Psoas muscle (tissue), 8 donors: ENCODE measurements at regions of chr1 and their contacts with region 1.

Region 1: GRCh38 chr1:42173155-42173933 is 8.8 kb upstream of the GUCA2A start:
- DNase-seq: peak; percentile 64 to 78
- ATAC-seq: peak; percentile 76 to 88 (median 80)
- H3K4me3 ChIP-seq: no peak overlapping the region
- H3K27ac ChIP-seq: no peak overlapping the region
- H3K4me1 ChIP-seq: peaks cover 21% of the 10 kb centered on the region
- H3K27me3 ChIP-seq: no peaks in the 10 kb centered on the region
- CTCF ChIP-seq: peak; percentile 96

Region 2: DNA sequence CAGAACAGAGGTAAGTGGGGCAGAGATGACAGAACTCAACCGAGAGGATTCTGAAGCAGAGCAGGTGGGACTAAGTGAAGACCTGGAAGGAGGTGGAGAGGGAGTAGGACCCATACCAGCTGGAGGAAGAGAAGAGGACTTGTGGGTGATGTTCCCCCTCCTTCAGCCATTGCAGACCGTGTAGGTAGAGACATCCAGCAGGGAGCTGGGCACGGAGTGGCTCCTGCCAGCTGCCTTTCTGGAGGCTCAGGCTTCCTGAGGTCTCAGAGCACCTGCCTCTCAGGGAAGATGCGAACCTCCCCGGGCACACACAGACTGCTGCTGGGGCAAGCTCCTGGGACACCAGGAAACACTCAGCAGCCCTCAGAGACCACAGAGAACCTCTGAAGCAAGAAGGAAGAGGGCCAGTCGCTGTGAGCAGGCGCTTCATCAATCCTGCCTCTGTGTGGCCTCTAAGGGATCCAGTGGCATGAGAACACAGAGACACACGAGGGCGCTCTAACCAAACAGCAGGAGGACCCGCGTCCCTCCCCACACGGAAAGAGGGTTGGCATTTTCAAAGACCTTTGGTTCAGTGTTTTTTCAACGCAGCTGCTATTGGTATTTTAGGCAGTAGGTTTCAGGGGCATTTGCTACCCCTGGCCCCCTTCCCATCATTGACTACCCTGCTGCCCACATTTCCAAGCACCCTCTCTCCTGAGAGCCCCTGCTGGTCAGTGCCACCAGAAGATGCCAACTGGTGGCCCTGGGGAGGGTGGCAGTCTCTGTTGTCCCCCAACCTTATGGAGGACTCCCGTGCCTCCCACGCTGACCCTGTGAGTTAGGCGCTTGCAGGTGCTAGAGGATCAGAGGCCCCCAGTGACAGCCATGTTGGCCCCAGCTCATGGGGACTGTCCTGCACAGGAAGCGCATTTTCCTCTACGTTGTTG is 599.3 kb before region 1 on chr1:
- intact Hi-C with region 1: loop called (anchors 2 to 5 kb)
- DNase-seq: peak; percentile 75 to 85
- ATAC-seq: peak; percentile 88 to 96 (median 90)
- H3K4me3 ChIP-seq: no peak overlapping the region
- H3K27ac ChIP-seq: no peak overlapping the region
- H3K4me1 ChIP-seq: no peaks in the 10 kb centered on the region
- H3K27me3 ChIP-seq: no peaks in the 10 kb centered on the region
- CTCF ChIP-seq: peak; percentile 89

Region 3: GRCh38 chr1:41812051-41812450 is 361.3 kb before region 1 on chr1:
- intact Hi-C with region 1: loop called (anchors 10 kb)
- DNase-seq: peak in 1 of 2 donors; percentile 28
- ATAC-seq: peak in 3 of 4 donors; percentile 37 to 60 (median 37)
- H3K4me3 ChIP-seq: no peak overlapping the region
- H3K27ac ChIP-seq: no peak overlapping the region
- H3K4me1 ChIP-seq: peaks cover 30% of the 10 kb centered on the region
- H3K27me3 ChIP-seq: no peaks in the 10 kb centered on the region
- CTCF ChIP-seq: peak; percentile 55

Region 4: GRCh38 chr1:41862384-41863174 is 310.8 kb before region 1 on chr1:
- intact Hi-C with region 1: no loop called
- DNase-seq: no peak
- ATAC-seq: no peak
- H3K4me3 ChIP-seq: no peak overlapping the region
- H3K27ac ChIP-seq: no peak overlapping the region
- H3K4me1 ChIP-seq: peaks cover 10% of the 10 kb centered on the region
- H3K27me3 ChIP-seq: no peaks in the 10 kb centered on the region
- CTCF ChIP-seq: no peak

Region 5: GRCh38 chr1:42311138-42311537 is 137.8 kb after region 1 on chr1:
- intact Hi-C with region 1: loop called in 1 of 2 experiments (anchors 5 kb)
- DNase-seq: no peak
- ATAC-seq: peak in 3 of 4 donors; percentile 46 to 72 (median 59)
- H3K4me3 ChIP-seq: no peak overlapping the region
- H3K27ac ChIP-seq: no peak overlapping the region
- H3K4me1 ChIP-seq: peaks cover 48% of the 10 kb centered on the region
- H3K27me3 ChIP-seq: no peaks in the 10 kb centered on the region
- CTCF ChIP-seq: no peak

Region 6: DNA sequence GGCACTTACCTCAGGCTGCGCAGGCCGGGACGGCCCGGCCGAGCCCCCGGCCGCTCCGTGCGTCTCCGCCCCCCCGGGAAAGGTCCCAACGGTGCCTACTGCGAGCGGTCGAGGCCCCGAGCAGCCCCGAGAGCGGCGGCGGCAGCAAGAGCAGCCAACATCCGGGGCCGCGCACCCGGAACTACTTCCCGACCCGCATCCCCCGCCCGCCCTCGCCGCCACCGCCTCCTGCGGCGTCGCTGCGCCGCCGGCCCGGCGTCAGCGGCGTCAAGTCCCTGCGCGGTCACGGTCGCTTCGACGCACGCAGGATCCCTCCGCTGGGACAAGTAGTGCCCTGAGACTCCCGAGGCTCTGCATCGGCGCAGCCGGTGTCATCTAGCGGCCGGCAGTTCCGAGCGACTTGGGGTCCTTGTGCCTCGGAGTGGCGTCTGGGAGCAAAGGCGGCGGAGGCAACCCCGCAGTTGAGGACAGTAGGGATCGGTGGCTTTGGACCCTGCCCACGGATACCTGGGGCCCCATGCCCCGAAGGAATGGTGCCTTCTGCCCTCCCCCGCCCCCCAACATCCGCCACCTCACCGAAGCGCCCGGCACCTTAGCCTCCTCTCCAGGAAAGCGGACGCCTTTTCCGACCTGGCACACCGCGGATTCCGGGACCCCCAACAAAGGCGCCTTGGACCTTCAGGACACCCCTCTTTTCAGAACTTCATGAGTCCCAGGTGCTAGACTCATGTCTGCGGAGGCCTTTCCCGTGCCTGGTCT is 161.9 kb after region 1 on chr1 and contains the start of gene FOXJ3:
- intact Hi-C with region 1: loop called (anchors 5 to 10 kb)
- DNase-seq: peak; percentile 94 to 97
- ATAC-seq: peak; percentile 93 to 96 (median 94)
- H3K4me3 ChIP-seq: peak within 1 kb of the TSS; percentile 97
- H3K27ac ChIP-seq: peak within 1 kb of the TSS; percentile 98
- H3K4me1 ChIP-seq: peaks cover 35% of the 10 kb centered on the region
- H3K27me3 ChIP-seq: no peaks in the 10 kb centered on the region
- CTCF ChIP-seq: no peak
- total RNA-seq, gene FOXJ3: 47.9 to 53.1 (median 49.1) TPM

Region 7: GRCh38 chr1:42456010-42456758 is 282.8 kb after region 1 on chr1 and contains the starts of genes PPCS and ZMYND12:
- intact Hi-C with region 1: loop called in 1 of 2 experiments (anchors 5 kb)
- DNase-seq: peak; percentile 89 to 92
- ATAC-seq: peak; percentile 94 to 97 (median 96)
- H3K4me3 ChIP-seq: peak within 1 kb of the TSS; percentile 87
- H3K27ac ChIP-seq: peak within 1 kb of the TSS; percentile 90
- H3K4me1 ChIP-seq: peaks cover 6% of the 10 kb centered on the region
- H3K27me3 ChIP-seq: no peaks in the 10 kb centered on the region
- CTCF ChIP-seq: no peak
- total RNA-seq, gene PPCS: 26.1 to 41.0 (median 34.9) TPM
- total RNA-seq, gene ZMYND12: 0.76 to 2.7 (median 1.0) TPM